ENCODE measurements at regions of chr5 and their contacts with region 1.

Region 1: GRCh38 chr5:141878711-141879425 is 658 bp upstream of the PCDH1 start:
- DNase-seq: peak; percentile 94
- ATAC-seq: peak; percentile 82
- H3K4me3 Mint-ChIP-seq: peak overlapping the region; percentile 55
- H3K27ac Mint-ChIP-seq: no peak overlapping the region
- H3K4me1 Mint-ChIP-seq: peaks cover 17% of the 10 kb centered on the region
- H3K27me3 Mint-ChIP-seq: peaks cover 70% of the 10 kb centered on the region
- CTCF ChIP-seq: peak; percentile 98

Region 2: DNA sequence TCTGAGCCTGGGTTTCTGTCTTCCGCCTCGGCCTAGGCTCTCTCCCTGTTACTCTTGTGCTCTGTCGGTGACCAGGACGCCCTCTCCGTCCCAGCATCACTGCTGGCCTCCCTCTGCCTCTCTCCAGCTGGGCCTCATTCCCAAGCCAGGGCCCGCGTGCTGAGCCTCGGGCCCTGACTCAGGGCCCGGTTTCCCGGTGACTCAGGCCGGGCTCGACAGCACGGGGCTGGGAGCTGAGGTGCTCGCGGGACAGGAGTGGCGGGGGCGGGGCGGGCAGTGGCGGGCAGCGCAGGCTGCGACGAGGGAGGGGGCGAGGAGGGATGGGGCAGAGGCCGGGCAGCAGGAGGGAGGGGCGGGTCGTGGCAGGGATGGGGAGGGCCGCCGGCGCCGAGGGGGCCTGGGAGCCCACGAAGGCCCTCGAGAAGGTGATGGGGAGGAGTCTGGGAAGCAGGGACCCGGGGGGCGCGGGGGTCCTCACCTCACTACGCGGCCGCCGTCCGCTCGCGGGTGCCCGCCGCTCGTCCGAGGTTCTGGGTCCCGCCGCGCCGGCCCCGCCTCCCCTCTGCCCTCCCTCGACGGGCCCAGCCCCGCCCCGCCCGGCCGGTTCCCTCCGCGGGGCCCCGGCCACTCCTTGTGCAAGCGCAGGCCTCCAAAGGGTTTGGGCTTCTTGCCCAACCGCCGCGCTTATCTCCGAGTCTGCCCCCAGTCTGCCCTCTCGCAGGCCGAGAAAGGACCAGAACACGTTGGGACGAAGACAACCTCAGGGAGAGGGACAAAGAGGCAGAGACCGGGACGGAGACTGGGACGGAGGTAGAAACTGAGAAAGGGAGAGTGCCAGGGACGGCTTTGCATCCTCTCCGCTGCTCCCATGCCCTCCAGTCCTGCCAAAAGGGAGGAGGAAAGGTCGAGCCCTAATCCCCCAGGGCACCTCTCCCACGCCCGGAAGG is 196.9 kb before region 1 on chr5 and contains the start of gene ARAP3:
- CTCF ChIA-PET with region 1: interaction called, 13 read pairs
- POLR2A ChIA-PET with region 1: no interaction called
- intact Hi-C with region 1: no loop called
- DNase-seq: peak; percentile 54
- ATAC-seq: peak; percentile 73
- H3K4me3 Mint-ChIP-seq: peak within 1 kb of the TSS; percentile 72
- H3K27ac Mint-ChIP-seq: peak within 1 kb of the TSS; percentile 68
- H3K4me1 Mint-ChIP-seq: peaks cover 24% of the 10 kb centered on the region
- H3K27me3 Mint-ChIP-seq: no peaks in the 10 kb centered on the region
- CTCF ChIP-seq: no peak
- total RNA-seq, gene ARAP3: 5.9 to 7.2 TPM

Region 3: GRCh38 chr5:141793881-141794280 is 85.0 kb before region 1 on chr5:
- CTCF ChIA-PET with region 1: interaction called, 10 read pairs
- POLR2A ChIA-PET with region 1: no interaction called
- intact Hi-C with region 1: no loop called
- DNase-seq: no peak
- ATAC-seq: no peak
- H3K4me3 Mint-ChIP-seq: no peak overlapping the region
- H3K27ac Mint-ChIP-seq: no peak overlapping the region
- H3K4me1 Mint-ChIP-seq: no peaks in the 10 kb centered on the region
- H3K27me3 Mint-ChIP-seq: peaks cover 7% of the 10 kb centered on the region
- CTCF ChIP-seq: no peak

Region 4: DNA sequence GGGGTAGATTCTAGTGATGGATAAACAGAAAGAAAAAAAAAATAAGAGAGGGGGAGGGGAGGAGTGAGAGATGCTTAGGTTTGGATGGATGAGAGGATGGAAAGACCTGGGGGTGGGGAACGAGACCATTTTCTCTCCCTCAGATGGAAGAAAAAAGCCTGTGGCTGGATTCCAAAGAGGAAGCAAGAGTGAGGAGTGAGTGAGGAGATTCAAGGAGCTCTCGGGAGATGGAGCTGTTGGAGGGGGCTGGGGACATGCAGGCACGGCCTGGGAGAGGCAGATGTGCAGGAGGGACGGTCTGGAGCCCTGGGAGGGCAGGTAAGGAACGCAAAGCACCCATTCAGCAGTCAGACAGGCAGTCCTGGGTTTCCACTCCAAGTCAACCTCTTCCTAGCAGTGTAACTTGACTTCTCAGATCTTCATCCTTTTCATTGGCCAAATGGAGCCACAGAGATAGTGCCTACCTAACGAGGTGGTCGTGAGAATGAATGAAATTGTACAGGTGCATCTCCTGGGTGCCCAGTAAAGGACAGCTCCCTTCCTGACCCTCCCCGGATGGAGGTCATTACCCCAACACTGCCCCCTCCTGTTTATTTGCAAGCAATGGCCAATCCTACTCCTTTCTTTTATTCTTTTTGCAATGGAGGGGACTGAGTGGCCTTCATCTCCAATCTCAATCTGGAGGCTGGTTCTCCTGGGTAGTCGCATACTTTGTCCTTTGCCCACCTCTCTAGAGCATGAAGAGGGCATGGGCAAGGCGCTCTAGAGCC is 52.9 kb before region 1 on chr5:
- CTCF ChIA-PET with region 1: interaction called, 15 read pairs
- POLR2A ChIA-PET with region 1: interaction called, 3 read pairs
- intact Hi-C with region 1: no loop called
- DNase-seq: peak; percentile 20
- ATAC-seq: peak; percentile 53
- H3K4me3 Mint-ChIP-seq: no peak overlapping the region
- H3K27ac Mint-ChIP-seq: no peak overlapping the region
- H3K4me1 Mint-ChIP-seq: no peaks in the 10 kb centered on the region
- H3K27me3 Mint-ChIP-seq: no peaks in the 10 kb centered on the region
- CTCF ChIP-seq: peak; percentile 38

Region 5: GRCh38 chr5:141858084-141858765 is 20.6 kb before region 1 on chr5:
- CTCF ChIA-PET with region 1: interaction called, 13 read pairs
- POLR2A ChIA-PET with region 1: no interaction called
- intact Hi-C with region 1: no loop called
- DNase-seq: no peak
- ATAC-seq: no peak
- H3K4me3 Mint-ChIP-seq: no peak overlapping the region
- H3K27ac Mint-ChIP-seq: no peak overlapping the region
- H3K4me1 Mint-ChIP-seq: no peaks in the 10 kb centered on the region
- H3K27me3 Mint-ChIP-seq: peaks cover 6% of the 10 kb centered on the region
- CTCF ChIP-seq: no peak

Region 6: DNA sequence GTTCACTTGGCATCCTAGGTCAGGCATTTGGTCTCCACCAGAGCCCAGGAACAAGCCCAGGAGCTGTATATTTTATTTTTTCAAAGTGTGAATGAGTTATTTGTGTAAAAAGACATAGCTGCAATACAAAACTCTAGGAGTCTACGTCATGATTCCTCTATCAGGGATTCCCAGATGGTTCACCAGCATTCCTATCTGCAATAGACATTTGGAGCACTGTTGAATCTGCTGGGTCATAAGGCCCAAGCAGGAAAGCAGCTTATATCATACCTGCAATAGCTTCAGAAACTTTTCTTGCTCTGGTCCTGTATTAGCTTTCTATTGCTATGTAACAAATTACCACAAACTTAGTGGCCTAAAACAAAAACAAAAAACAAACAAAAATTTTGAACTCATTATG is 28.1 kb after region 1 on chr5:
- CTCF ChIA-PET with region 1: interaction called, 11 read pairs
- POLR2A ChIA-PET with region 1: no interaction called
- intact Hi-C with region 1: no loop called
- DNase-seq: no peak
- ATAC-seq: no peak
- H3K4me3 Mint-ChIP-seq: no peak overlapping the region
- H3K27ac Mint-ChIP-seq: no peak overlapping the region
- H3K4me1 Mint-ChIP-seq: peaks cover 2% of the 10 kb centered on the region
- H3K27me3 Mint-ChIP-seq: peaks cover 9% of the 10 kb centered on the region
- CTCF ChIP-seq: no peak

Region 7: GRCh38 chr5:141960449-141961202 is 81.8 kb after region 1 on chr5:
- CTCF ChIA-PET with region 1: interaction called, 94 read pairs
- POLR2A ChIA-PET with region 1: interaction called, 8 read pairs
- intact Hi-C with region 1: loop called (anchors 5 kb)
- DNase-seq: peak; percentile 94
- ATAC-seq: peak; percentile 88
- H3K4me3 Mint-ChIP-seq: peak overlapping the region; percentile 44
- H3K27ac Mint-ChIP-seq: peak overlapping the region; percentile 80
- H3K4me1 Mint-ChIP-seq: peaks cover 45% of the 10 kb centered on the region
- H3K27me3 Mint-ChIP-seq: no peaks in the 10 kb centered on the region
- CTCF ChIP-seq: peak; percentile 62

Region 8: GRCh38 chr5:141982626-141983025 is 103.8 kb after region 1 on chr5:
- CTCF ChIA-PET with region 1: no interaction called
- POLR2A ChIA-PET with region 1: no interaction called
- intact Hi-C with region 1: no loop called
- DNase-seq: no peak
- ATAC-seq: no peak
- H3K4me3 Mint-ChIP-seq: no peak overlapping the region
- H3K27ac Mint-ChIP-seq: no peak overlapping the region
- H3K4me1 Mint-ChIP-seq: no peaks in the 10 kb centered on the region
- H3K27me3 Mint-ChIP-seq: no peaks in the 10 kb centered on the region
- CTCF ChIP-seq: no peak

Region 9: DNA sequence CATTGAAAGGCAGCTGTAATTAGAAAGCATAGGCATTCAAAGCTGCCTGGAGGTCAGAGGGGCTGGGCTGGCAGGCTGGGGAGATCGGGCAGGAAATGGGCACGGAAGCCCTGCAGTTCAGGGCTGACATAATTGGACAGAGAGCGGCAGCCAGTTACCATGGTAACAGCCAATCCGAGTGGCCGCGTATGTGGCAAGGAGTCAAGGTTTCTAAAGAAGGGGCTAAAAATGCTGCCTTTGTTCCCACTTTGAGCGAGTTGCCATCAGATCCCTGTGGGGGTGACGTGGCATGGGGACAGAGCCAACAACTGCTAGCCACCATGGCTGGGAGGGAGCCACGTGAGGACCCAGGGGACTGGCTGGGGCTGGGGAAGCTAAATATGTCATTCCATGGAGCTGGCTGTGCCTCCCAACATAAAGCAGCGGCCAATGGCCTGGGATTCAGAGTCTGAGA is 185.0 kb after region 1 on chr5:
- CTCF ChIA-PET with region 1: no interaction called
- POLR2A ChIA-PET with region 1: no interaction called
- intact Hi-C with region 1: no loop called
- DNase-seq: peak; percentile 74
- ATAC-seq: peak; percentile 93
- H3K4me3 Mint-ChIP-seq: peak overlapping the region; percentile 14
- H3K27ac Mint-ChIP-seq: peak overlapping the region; percentile 19
- H3K4me1 Mint-ChIP-seq: peaks cover 12% of the 10 kb centered on the region
- H3K27me3 Mint-ChIP-seq: no peaks in the 10 kb centered on the region
- CTCF ChIP-seq: no peak